CD8-positive, alpha-beta memory T cell (primary cell): ENCODE measurements at regions of chr22 and their contacts with region 1.

Region 1: DNA sequence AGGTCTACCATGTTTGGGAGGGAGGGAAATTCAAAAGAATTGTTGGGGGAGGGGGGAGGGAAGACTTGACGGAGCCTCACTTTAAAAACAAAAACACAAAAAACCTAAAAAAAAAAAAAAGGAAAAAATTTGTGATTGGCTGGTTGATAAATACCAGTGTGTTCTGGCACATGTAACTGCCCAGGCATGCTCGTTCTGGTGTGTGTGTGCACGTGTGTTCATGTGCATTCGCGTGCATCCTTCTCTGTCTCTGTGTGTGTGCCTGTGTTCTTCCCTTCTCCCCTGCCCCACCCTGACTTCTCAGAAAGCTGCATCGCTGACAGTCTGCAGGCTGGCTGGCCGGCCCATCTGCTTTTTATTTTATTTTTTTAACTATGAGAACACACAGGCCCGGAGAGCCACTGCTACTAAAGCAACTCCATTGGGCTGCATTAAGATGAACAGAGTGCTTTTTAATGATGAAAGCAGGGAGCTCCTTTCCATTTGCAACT is 22.6 kb upstream of the ADSL start:
- DNase-seq: peak in 1 of 5 donors; percentile 49
- H3K4me3 ChIP-seq: peak overlapping the region; percentile 49
- H3K4me3 Mint-ChIP-seq: peak overlapping the region; percentile 46 to 84 (median 80)
- H3K27ac ChIP-seq: peak overlapping the region; percentile 58
- H3K27ac Mint-ChIP-seq: peak overlapping the region; percentile 83 to 98 (median 96)
- H3K4me1 ChIP-seq: peaks cover 69% of the 10 kb centered on the region
- H3K4me1 Mint-ChIP-seq: peaks cover 58 to 87% (median 70%) of the 10 kb centered on the region in 3 donors
- H3K27me3 ChIP-seq: no peaks in the 10 kb centered on the region
- H3K27me3 Mint-ChIP-seq: no peaks in the 10 kb centered on the region

Region 2: GRCh38 chr22:40210818-40211217 is 112.9 kb before region 1 on chr22:
- CTCF ChIA-PET with region 1: no interaction called
- POLR2A ChIA-PET with region 1: no interaction called
- DNase-seq: no peak
- H3K4me3 ChIP-seq: no peak overlapping the region
- H3K4me3 Mint-ChIP-seq: no peak overlapping the region
- H3K27ac ChIP-seq: no peak overlapping the region
- H3K27ac Mint-ChIP-seq: peak overlapping the region; percentile 17 to 81 (median 59)
- H3K4me1 ChIP-seq: peaks cover 60% of the 10 kb centered on the region
- H3K4me1 Mint-ChIP-seq: peaks cover 67 to 88% (median 78%) of the 10 kb centered on the region in 3 donors
- H3K27me3 ChIP-seq: no peaks in the 10 kb centered on the region
- H3K27me3 Mint-ChIP-seq: no peaks in the 10 kb centered on the region

Region 3: DNA sequence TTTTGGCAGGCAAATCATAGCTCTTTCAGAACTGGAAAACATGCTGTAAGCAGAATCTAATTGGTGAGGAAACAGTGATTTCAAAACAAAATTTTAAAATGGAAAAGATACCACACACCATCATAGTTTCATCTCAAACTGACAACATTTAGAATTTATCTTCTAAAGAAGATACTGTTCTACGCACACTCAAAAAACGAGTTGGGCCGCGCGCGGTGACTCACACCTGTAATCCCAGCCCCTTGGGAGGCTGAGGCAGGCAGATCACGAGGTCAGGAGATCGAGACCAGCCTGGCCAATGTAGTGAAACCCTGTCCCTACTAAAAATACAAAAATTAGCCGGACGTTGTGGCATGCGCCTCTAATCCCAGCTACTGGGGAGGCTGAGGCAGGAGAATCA is 21.6 kb before region 1 on chr22:
- CTCF ChIA-PET with region 1: no interaction called
- POLR2A ChIA-PET with region 1: no interaction called
- DNase-seq: no peak
- H3K4me3 ChIP-seq: no peak overlapping the region
- H3K4me3 Mint-ChIP-seq: no peak overlapping the region
- H3K27ac ChIP-seq: no peak overlapping the region
- H3K27ac Mint-ChIP-seq: no peak overlapping the region
- H3K4me1 ChIP-seq: no peaks in the 10 kb centered on the region
- H3K4me1 Mint-ChIP-seq: peaks cover 2 to 10% (median 5%) of the 10 kb centered on the region in 3 donors
- H3K27me3 ChIP-seq: no peaks in the 10 kb centered on the region
- H3K27me3 Mint-ChIP-seq: no peaks in the 10 kb centered on the region

Region 4: DNA sequence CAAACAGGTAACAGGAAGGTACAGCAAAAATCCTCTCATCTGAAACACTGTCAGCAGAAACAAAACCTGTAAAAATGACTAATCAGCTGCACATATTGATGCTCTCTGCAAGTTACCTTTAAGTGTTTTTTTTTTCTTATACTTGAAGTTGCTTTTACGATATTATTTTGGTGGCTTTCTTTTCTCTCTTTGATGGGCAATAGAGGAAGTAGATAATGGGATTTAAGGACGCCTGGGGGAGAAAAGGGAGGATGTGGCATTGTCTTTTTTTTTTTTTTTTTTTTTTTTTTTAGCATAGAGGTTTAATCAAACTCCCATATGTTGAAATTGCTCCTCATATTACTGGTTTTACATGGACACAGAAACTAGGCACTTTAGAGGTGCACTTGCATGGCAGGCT is 11.2 kb after region 1 on chr22:
- CTCF ChIA-PET with region 1: no interaction called
- POLR2A ChIA-PET with region 1: interaction called, 17 read pairs
- DNase-seq: peak in 2 of 5 donors; percentile 64 to 72
- H3K4me3 ChIP-seq: no peak overlapping the region
- H3K4me3 Mint-ChIP-seq: peak overlapping the region; percentile 49 to 81 (median 67)
- H3K27ac ChIP-seq: no peak overlapping the region
- H3K27ac Mint-ChIP-seq: peak overlapping the region; percentile 31 to 86 (median 74)
- H3K4me1 ChIP-seq: peaks cover 72% of the 10 kb centered on the region
- H3K4me1 Mint-ChIP-seq: peaks cover 74 to 96% (median 95%) of the 10 kb centered on the region in 3 donors
- H3K27me3 ChIP-seq: no peaks in the 10 kb centered on the region
- H3K27me3 Mint-ChIP-seq: no peaks in the 10 kb centered on the region

Region 5: DNA sequence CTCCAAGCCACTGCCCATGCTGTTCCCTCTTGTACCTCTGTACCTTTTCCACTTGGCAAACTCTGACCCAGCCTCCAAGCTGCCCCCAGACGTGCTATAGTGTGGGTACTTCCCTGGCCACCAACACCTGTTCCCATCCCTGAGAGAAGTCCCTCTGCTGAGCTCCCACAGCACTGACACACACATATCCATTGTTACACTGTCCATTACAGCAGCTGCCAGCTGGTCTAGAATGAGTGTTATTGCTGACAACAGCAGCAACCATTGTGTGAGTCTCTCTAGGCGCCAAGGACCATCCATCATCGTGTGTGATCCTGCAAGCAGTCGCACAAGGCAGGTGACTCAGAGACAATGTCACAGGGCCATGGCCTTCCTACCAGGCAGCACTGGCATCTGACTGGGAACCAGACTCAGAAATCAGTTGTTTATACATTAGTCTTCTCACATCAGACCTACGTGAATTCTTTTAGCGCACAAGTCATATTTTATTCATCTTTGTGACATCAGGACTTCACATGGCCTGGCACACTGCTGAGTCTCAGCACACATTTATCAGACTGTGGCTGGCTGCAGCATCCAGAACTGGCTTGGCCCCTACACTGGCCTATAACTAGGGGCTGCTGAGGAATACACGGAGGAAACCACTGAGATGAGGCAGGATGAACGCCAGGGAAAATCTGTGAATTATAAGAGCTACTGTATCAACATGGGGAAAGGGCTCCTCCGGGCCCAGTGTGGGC is 103.0 kb after region 1 on chr22:
- CTCF ChIA-PET with region 1: no interaction called
- POLR2A ChIA-PET with region 1: interaction called, 10 read pairs
- DNase-seq: no peak
- H3K4me3 ChIP-seq: no peak overlapping the region
- H3K4me3 Mint-ChIP-seq: no peak overlapping the region
- H3K27ac ChIP-seq: peak overlapping the region; percentile 9
- H3K27ac Mint-ChIP-seq: peak overlapping the region in 6 of 8 donors; percentile 10 to 85 (median 42)
- H3K4me1 ChIP-seq: no peaks in the 10 kb centered on the region
- H3K4me1 Mint-ChIP-seq: peaks cover 9 to 23% (median 20%) of the 10 kb centered on the region in 3 donors
- H3K27me3 ChIP-seq: no peaks in the 10 kb centered on the region
- H3K27me3 Mint-ChIP-seq: peaks cover 0 to 4% of the 10 kb centered on the region in 2 donors